ENCODE measurements at regions of chr17 and their contacts with region 1.

Region 1: DNA sequence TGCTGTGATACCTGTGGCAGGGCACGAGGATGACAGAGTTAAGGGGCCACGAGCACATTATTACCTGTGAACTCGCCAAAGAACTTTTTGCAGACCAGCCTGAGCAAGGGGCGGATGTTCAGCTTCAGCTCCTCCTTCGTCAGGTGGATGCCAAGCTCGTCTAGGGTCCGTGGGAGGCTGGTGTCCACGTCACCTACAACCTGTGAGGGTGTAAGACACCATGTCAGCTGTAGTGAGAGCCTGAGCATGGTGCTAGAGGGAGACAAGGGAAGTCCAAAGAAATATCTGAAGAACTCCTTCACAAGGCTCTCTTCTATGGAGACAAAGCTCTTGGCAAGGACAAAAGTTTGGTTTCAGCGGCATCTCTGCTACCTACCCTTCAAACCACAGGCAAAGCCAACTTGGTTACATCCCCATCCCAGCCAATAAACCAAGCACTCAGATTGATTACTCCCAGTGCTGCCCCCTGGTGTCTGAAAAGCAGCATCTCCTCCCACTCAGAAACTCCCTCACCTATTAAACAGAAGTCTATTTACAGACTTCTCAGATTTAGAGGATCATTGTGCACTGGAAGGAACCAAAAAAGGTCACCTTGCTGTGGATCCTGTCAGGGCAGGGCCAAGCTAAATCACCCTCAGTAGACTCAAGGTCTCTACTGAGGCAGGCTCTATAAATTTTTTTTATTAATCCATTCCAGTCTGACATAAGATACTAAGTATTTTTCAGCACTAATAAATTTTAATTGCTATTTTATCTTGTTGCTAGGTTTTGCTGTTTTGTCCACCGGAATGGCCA is 17.4 kb downstream of the HIGD1B start:
- DNase-seq: peak; percentile 54 to 69 (median 69)
- H3K4me3 ChIP-seq: no peak overlapping the region
- H3K4me3 Mint-ChIP-seq: no peak overlapping the region
- H3K27ac ChIP-seq: no peak overlapping the region
- H3K27ac Mint-ChIP-seq: peak overlapping the region in 1 of 7 donors; percentile 18
- H3K4me1 ChIP-seq: no peaks in the 10 kb centered on the region
- H3K4me1 Mint-ChIP-seq: no peaks in the 10 kb centered on the region
- H3K27me3 ChIP-seq: no peaks in the 10 kb centered on the region
- H3K27me3 Mint-ChIP-seq: no peaks in the 10 kb centered on the region
- CTCF ChIP-seq: peak; percentile 90

Region 2: GRCh38 chr17:44758414-44759085 is 106.5 kb before region 1 on chr17 and contains the start of gene ADAM11:
- intact Hi-C with region 1: no loop called
- DNase-seq: peak in 1 of 3 donors; percentile 3
- H3K4me3 ChIP-seq: peak within 1 kb of the TSS in 1 of 3 experiments; percentile 14
- H3K4me3 Mint-ChIP-seq: peak within 1 kb of the TSS; percentile 27 to 37
- H3K27ac ChIP-seq: no peak within 1 kb of the TSS
- H3K27ac Mint-ChIP-seq: peak within 1 kb of the TSS in 1 of 7 donors; percentile 67
- H3K4me1 ChIP-seq: peaks cover 5 to 8% of the 10 kb centered on the region in 2 donors
- H3K4me1 Mint-ChIP-seq: peaks cover 2% of the 10 kb centered on the region
- H3K27me3 ChIP-seq: peaks cover 22 to 35% of the 10 kb centered on the region in 2 donors
- H3K27me3 Mint-ChIP-seq: peaks cover 41 to 51% (median 43%) of the 10 kb centered on the region in 3 donors
- CTCF ChIP-seq: no peak
- polyA plus RNA-seq, gene ADAM11: 0.19 TPM in 1 of 3 donors, not detected in the others

Region 3: GRCh38 chr17:44775136-44775837 is 89.8 kb before region 1 on chr17:
- intact Hi-C with region 1: loop called (anchors 1 kb)
- DNase-seq: peak; percentile 92 to 97 (median 92)
- H3K4me3 ChIP-seq: peak overlapping the region; percentile 38 to 88 (median 50)
- H3K4me3 Mint-ChIP-seq: peak overlapping the region; percentile 79 to 90
- H3K27ac ChIP-seq: no peak overlapping the region
- H3K27ac Mint-ChIP-seq: peak overlapping the region in 1 of 7 donors; percentile 37
- H3K4me1 ChIP-seq: peaks cover 30 to 40% of the 10 kb centered on the region in 2 donors
- H3K4me1 Mint-ChIP-seq: peaks cover 36% of the 10 kb centered on the region
- H3K27me3 ChIP-seq: peaks cover 0 to 21% of the 10 kb centered on the region in 2 donors
- H3K27me3 Mint-ChIP-seq: peaks cover 20 to 46% (median 34%) of the 10 kb centered on the region in 3 donors
- CTCF ChIP-seq: peak; percentile 56

Region 4: DNA sequence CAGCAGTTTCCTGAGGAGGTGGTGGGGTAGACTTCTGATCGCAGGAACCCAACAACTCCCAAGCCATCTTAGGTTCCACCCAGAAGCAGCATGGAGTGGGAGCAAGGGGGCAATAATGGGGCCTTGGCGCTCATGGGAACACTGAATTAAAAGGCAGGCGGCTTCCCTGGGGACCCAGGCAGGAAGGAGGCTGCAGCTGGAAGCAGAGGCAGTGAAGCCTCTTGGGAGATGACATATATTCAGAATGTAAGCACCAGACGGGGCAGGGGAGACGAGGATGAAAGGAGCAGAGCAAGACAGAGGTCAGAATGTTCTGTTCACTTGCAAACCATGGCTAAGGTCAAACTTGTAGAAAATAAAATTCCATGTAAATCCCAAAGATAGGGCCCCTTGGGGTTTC is 14.5 kb before region 1 on chr17:
- intact Hi-C with region 1: no loop called
- DNase-seq: no peak
- H3K4me3 ChIP-seq: no peak overlapping the region
- H3K4me3 Mint-ChIP-seq: no peak overlapping the region
- H3K27ac ChIP-seq: no peak overlapping the region
- H3K27ac Mint-ChIP-seq: peak overlapping the region in 3 of 7 donors; percentile 26 to 59 (median 53)
- H3K4me1 ChIP-seq: no peaks in the 10 kb centered on the region
- H3K4me1 Mint-ChIP-seq: no peaks in the 10 kb centered on the region
- H3K27me3 ChIP-seq: no peaks in the 10 kb centered on the region
- H3K27me3 Mint-ChIP-seq: peaks cover 0 to 7% (median 2%) of the 10 kb centered on the region in 3 donors
- CTCF ChIP-seq: no peak